Left colon (tissue), 2 donors: ENCODE measurements at regions of chr18 and their contacts with region 1.

Region 1: DNA sequence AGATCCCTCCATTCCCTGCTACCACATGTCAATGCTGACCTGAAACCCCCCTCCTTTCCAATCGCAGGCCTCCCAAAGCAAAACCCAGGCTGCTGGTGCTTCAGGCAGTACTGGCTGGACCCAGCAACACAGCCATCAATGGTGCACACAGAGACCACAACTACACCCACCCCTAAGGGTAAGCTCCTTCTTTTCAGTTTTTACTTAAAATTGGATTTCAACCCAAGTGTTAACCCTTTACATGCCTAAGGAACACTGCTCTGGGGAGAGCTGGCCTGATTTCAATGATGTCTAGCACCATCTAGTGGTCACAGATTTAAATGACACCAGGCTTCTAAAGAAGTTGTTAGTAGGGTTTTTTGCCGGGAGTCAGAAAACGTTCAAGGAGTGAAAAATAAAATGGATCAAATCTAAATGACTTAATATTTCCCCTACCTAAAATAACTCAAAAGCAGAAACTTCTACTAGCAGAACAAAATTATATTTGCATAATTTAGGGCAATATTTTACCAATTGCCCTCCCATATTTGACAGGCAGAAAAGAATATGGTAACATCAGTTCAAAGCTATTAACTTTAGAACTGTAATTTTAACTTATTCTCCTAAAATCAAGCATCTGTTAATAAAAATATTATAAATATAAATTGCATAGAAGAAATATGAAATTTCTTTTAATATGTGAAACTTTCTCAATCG is 24.6 kb downstream of the FECH start:
- DNase-seq: no peak
- ATAC-seq: peak; percentile 45

Region 2: GRCh38 chr18:56748698-56749268 is 813.1 kb before region 1 on chr18:
- intact Hi-C with region 1: loop called in 1 of 2 experiments (anchors 5 kb)
- DNase-seq: no peak
- ATAC-seq: peak; percentile 48

Region 3: DNA sequence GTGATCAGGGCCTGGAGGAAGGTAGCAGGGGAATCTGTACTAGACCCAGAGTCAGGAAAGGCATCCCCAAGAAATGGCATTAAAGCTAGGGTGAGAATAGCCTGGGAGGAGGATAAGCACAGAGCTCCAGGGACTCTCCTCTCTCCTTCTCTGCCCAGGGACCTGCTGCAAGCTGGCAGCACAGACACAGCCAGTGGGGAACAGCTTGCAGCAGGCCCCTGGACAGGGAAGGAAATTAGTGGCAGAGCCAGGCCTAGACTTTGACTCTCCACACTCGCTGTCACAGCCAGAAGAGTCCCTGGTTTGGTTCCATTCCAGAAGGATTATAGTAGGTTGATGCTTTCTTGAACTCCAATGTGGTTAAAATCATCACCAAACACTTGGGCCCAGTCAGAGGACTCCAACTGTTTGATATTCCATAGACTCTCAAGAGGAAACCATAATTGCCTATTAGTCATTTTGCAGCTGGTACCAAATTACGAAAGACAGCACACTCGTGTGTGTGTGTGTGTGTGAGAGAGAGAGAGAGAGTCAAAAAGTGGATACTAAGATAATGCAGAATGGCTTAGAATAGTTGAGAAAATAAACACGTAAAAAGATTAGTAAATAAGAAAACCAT is 336.7 kb after region 1 on chr18:
- intact Hi-C with region 1: no loop called
- DNase-seq: no peak
- ATAC-seq: no peak